Activated naive CD4-positive, alpha-beta T cell treated with anti-CD3 and anti-CD28 coated beads for 36 hours (primary cell): ENCODE measurements at regions of chr1 and their contacts with region 1.

Region 1: GRCh38 chr1:1511533-1512285 is at the start of gene ATAD3A:
- DNase-seq: peak; percentile 99
- H3K4me3 Mint-ChIP-seq: peak within 1 kb of the TSS; percentile 80
- H3K27ac Mint-ChIP-seq: peak within 1 kb of the TSS; percentile 73
- H3K4me1 Mint-ChIP-seq: peaks cover 10% of the 10 kb centered on the region
- H3K27me3 Mint-ChIP-seq: no peaks in the 10 kb centered on the region
- total RNA-seq, gene ATAD3A: 39.4 to 41.0 TPM

Region 2: GRCh38 chr1:1349256-1350012 is 162.3 kb before region 1 on chr1 and contains the start of gene DVL1:
- CTCF ChIA-PET with region 1: no interaction called
- intact Hi-C with region 1: loop called (anchors 2 kb)
- DNase-seq: peak; percentile 79
- H3K4me3 Mint-ChIP-seq: peak within 1 kb of the TSS; percentile 76
- H3K27ac Mint-ChIP-seq: no peak within 1 kb of the TSS
- H3K4me1 Mint-ChIP-seq: peaks cover 28% of the 10 kb centered on the region
- H3K27me3 Mint-ChIP-seq: peaks cover 12% of the 10 kb centered on the region
- total RNA-seq, gene DVL1: 33.4 to 35.0 TPM

Region 3: DNA sequence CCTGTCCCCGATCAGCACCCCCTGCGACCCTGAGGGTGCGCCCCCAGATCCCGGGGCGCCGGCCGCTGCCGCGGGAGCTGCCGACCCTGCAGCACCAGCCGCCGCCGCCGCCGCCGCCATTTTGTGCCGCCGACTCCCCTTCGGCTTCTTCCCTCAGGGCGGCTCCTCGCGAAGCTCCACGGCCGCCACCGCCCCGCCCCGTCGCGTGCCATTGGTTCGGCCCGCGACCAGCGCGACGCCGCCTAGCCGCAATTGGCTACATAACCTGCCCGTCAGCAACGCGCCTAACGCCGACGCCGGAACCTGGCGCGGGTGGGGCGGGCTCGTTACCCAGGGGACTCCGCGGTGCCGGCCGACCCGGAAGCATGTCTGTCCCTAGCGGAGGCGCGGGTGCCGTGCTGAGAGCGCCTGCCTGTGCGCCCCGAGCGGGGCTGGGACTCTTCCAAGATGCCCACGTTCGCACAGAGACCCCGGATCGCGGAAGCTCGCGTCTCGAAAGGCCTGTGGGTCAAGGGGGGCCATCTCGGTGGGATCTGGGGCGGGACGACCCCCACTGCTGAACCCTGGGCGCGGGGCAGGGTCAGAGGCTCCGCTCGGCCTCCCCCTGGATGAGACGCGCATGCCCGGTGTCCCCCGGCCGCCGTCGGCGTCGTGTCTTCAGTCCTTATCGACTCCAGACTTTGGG is 112.4 kb before region 1 on chr1 and contains the start of gene CCNL2:
- CTCF ChIA-PET with region 1: no interaction called
- intact Hi-C with region 1: loop called (anchors 2 kb)
- DNase-seq: peak; percentile 99
- H3K4me3 Mint-ChIP-seq: peak within 1 kb of the TSS; percentile 91
- H3K27ac Mint-ChIP-seq: peak within 1 kb of the TSS; percentile 85
- H3K4me1 Mint-ChIP-seq: peaks cover 57% of the 10 kb centered on the region
- H3K27me3 Mint-ChIP-seq: no peaks in the 10 kb centered on the region
- total RNA-seq, gene CCNL2: 97.7 to 108 TPM

Region 4: DNA sequence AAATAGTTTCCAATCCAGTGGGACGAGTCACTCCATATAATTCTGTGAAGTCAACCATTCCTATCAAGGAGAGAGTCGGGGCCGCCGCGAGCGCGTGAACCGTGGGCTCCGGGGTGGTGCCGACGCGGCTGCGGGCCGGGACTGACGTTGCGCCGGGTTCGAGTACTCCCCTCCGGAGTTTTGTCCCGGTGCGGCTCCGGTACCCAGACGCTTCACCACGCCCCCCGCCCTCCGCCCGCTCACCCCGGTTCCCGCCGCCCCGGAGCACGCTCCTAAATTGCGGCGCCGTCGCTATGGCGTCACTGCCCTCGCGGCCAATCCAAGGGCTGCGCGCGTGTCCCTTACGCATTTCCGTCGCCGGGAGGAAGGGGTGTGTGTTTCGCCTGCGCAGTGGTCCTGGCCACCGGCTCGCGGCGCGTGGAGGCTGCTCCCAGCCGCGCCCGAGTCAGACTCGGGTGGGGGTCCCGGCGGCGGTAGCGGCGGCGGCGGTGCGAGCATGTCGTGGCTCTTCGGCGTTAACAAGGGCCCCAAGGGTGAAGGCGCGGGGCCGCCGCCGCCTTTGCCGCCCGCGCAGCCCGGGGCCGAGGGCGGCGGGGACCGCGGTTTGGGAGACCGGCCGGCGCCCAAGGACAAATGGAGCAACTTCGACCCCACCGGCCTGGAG is 40.2 kb before region 1 on chr1 and contains the start of gene ATAD3B:
- CTCF ChIA-PET with region 1: no interaction called
- intact Hi-C with region 1: loop called (anchors 1 kb)
- DNase-seq: peak; percentile 96
- H3K4me3 Mint-ChIP-seq: peak within 1 kb of the TSS; percentile 80
- H3K27ac Mint-ChIP-seq: peak within 1 kb of the TSS; percentile 46
- H3K4me1 Mint-ChIP-seq: peaks cover 14% of the 10 kb centered on the region
- H3K27me3 Mint-ChIP-seq: no peaks in the 10 kb centered on the region
- total RNA-seq, gene ATAD3B: 32.7 to 38.7 TPM